Sigmoid colon (tissue), 7 donors: ENCODE measurements at regions of chr22 and their contacts with region 1.

Region 1: GRCh38 chr22:42662114-42663021 is 13.2 kb upstream of the CYB5R3 start:
- DNase-seq: peak; percentile 86
- H3K4me3 ChIP-seq: peak overlapping the region; percentile 32 to 57 (median 53)
- H3K27ac ChIP-seq: peak overlapping the region; percentile 67 to 82 (median 71)
- H3K4me1 ChIP-seq: peaks cover 0 to 27% (median 16%) of the 10 kb centered on the region in 4 donors
- H3K27me3 ChIP-seq: no peaks in the 10 kb centered on the region
- CTCF ChIP-seq: peak; percentile 42 to 81 (median 64)
- EP300 ChIP-seq: no peak
- POLR2A ChIP-seq: no peak

Region 2: GRCh38 chr22:41946629-41947423 is 715.5 kb before region 1 on chr22 and contains the start of gene CENPM:
- intact Hi-C with region 1: no loop called
- DNase-seq: peak; percentile 94
- H3K4me3 ChIP-seq: peak within 1 kb of the TSS; percentile 45 to 72 (median 60)
- H3K27ac ChIP-seq: peak within 1 kb of the TSS; percentile 15 to 68 (median 60)
- H3K4me1 ChIP-seq: peaks cover 0 to 17% (median 11%) of the 10 kb centered on the region in 4 donors
- H3K27me3 ChIP-seq: no peaks in the 10 kb centered on the region
- CTCF ChIP-seq: peak in 1 of 4 experiments; percentile 19
- EP300 ChIP-seq: no peak
- POLR2A ChIP-seq: no peak
- total RNA-seq, gene CENPM: 1.1 to 5.4 (median 2.5) TPM in 3 of 4 donors, not detected in the other

Region 3: DNA sequence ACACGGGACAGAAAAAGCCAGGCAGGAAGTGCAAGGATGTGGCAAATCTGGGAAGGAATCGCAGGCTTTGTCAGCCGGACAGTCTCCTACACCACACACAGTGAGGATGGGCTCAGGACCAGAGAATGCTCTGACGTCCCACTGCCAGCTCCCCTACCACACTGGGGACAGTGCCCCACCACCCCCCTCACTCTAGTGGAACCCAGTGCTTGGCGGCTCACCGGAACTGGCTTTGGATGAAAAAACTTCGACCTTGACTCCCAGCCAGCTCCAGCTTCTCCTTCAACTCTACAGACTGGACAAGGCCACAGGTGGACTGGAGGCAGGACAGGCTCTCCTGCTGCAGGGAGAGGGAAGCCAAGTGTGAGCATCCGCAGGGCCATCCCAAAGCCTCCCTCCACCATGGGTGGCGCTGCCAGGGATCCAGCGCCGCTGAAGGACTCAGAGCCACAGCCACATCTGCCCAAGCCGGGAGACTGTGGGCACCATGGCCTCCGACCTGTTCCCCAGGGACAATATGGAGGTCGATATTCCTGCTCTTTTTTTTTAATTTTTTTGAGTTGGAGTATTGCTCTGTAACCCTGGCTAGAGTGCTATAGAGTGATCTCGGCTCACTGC is 84.6 kb before region 1 on chr22:
- intact Hi-C with region 1: no loop called
- DNase-seq: no peak
- H3K4me3 ChIP-seq: no peak overlapping the region
- H3K27ac ChIP-seq: no peak overlapping the region
- H3K4me1 ChIP-seq: peaks cover 0 to 10% (median 5%) of the 10 kb centered on the region in 4 donors
- H3K27me3 ChIP-seq: no peaks in the 10 kb centered on the region
- CTCF ChIP-seq: no peak
- EP300 ChIP-seq: no peak
- POLR2A ChIP-seq: no peak

Region 4: DNA sequence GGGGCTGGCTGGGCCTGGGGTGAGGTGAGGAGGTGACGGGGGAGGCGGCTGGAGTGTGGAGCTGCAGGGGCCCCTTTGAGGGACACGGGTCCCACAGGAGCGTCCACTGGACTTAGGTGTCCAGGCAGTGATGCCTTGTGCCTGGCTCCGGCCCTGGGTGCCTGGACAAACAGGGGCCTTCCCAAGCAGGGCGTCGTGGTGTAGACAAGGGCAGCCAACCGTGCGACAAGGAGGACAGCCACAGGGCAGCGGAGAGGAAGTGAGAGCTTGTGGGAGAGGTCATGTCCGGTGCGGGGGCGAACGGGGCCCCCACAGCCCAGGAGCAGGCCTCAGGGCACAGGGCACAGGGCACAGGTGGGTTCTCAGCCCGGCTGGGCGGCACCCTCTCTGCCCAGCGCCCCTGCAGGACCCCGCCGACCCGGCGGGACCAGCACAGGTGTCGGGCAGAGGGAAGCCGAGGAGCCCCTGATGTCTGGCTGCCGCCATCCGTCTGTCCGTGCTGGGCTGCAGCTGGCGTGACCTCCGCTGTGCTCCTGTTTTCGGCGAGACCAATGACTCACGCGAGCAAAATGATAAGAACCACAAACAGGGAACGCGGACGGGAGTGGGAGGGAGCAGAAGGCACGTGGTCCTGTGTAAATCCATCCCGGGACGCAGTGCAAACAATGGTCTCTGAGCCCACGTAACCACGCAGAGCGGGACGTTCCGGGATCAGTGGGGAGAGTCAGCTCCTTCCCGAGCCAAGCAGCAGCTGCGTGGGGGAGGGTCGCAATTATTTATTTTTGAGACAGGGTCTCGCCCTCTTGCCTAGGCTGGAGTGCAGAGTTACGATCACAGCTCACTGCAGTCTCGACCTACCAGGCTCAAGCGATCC is 107.4 kb after region 1 on chr22:
- intact Hi-C with region 1: loop called (anchors 5 kb)
- DNase-seq: peak; percentile 85
- H3K4me3 ChIP-seq: peak overlapping the region in 3 of 4 donors; percentile 19 to 31 (median 25)
- H3K27ac ChIP-seq: peak overlapping the region in 1 of 4 donors; percentile 25
- H3K4me1 ChIP-seq: peaks cover 0 to 14% (median 12%) of the 10 kb centered on the region in 4 donors
- H3K27me3 ChIP-seq: no peaks in the 10 kb centered on the region
- CTCF ChIP-seq: no peak
- EP300 ChIP-seq: no peak
- POLR2A ChIP-seq: no peak